HEK293 (cell line): ENCODE measurements at regions of chr16 and their contacts with region 1.

Region 1: DNA sequence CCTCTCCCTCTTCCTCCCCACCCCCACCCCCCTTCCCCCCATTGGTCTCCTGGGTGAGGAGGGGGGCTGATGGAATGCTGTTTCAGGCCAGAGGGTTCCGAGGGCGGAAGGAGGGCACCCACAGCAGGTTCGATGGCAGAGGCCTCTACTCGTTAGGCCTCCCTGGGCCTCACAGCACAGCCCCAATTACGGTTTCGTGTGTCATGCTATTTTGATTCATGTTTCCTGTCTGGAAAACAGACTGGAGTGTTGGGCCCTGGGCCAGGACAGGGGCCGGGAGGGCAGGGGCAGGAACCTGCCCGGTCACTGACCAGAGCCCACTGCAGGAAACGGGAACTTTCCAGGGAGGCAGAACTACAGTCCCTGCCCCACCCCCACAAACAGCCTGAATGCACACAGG is 138.2 kb downstream of the C16orf95 start:
- H3K4me3 ChIP-seq: no peak overlapping the region
- H3K27ac ChIP-seq: no peak overlapping the region
- H3K4me1 ChIP-seq: no peaks in the 10 kb centered on the region
- CTCF ChIP-seq: no peak

Region 2: GRCh38 chr16:86929057-86929871 is 249.7 kb before region 1 on chr16:
- CTCF ChIA-PET with region 1: no interaction called
- POLR2A ChIA-PET with region 1: interaction called, 10 read pairs
- H3K4me3 ChIP-seq: no peak overlapping the region; the same call in 1 of the 2 replicates
- H3K27ac ChIP-seq: peak overlapping the region; percentile 54
- H3K4me1 ChIP-seq: peaks cover 16% of the 10 kb centered on the region
- CTCF ChIP-seq: no peak